ENCODE measurements at regions of chr2 and their contacts with region 1.

Region 1: GRCh38 chr2:29309090-29310029 is 194.1 kb downstream of the CLIP4 start:
- DNase-seq: peak; percentile 72 to 84 (median 76)
- H3K4me3 ChIP-seq: no peak overlapping the region
- H3K27ac ChIP-seq: no peak overlapping the region
- H3K4me1 ChIP-seq: peaks cover 5 to 31% (median 17%) of the 10 kb centered on the region in 4 experiments
- H3K27me3 ChIP-seq: peaks cover 0 to 1% (median 0%) of the 10 kb centered on the region in 5 experiments

Region 2: GRCh38 chr2:28729698-28730097 is 579.7 kb before region 1 on chr2:
- CTCF ChIA-PET with region 1: no interaction called
- POLR2A ChIA-PET with region 1: no interaction called
- DNase-seq: no peak
- H3K4me3 ChIP-seq: no peak overlapping the region
- H3K27ac ChIP-seq: no peak overlapping the region
- H3K4me1 ChIP-seq: no peaks in the 10 kb centered on the region
- H3K27me3 ChIP-seq: no peaks in the 10 kb centered on the region

Region 3: GRCh38 chr2:29097569-29097968 is 211.8 kb before region 1 on chr2:
- CTCF ChIA-PET with region 1: no interaction called
- POLR2A ChIA-PET with region 1: no interaction called
- DNase-seq: no peak
- H3K4me3 ChIP-seq: no peak overlapping the region
- H3K27ac ChIP-seq: no peak overlapping the region
- H3K4me1 ChIP-seq: no peaks in the 10 kb centered on the region
- H3K27me3 ChIP-seq: no peaks in the 10 kb centered on the region

Region 4: DNA sequence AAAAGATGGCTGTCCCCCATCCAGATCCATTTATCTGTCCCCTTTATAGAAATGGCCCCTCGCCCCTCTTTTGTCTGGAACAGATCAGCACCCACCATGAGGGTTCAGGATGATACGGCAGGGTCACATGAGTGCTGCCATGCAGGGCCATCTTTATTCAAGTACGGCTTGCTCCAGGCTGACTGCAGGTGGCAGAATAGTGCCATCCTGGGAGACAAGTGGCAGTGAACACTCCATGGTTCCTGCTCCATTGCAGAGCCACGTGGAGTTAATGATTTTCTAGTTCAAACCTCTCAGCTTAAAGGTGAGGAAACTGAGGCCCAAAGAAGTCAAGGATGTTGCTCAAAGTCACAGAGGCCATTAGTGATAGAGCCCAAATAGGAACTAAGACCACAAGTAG is 13.5 kb before region 1 on chr2:
- CTCF ChIA-PET with region 1: interaction called, 20 read pairs
- POLR2A ChIA-PET with region 1: no interaction called
- DNase-seq: peak; percentile 44 to 70 (median 58)
- H3K4me3 ChIP-seq: no peak overlapping the region
- H3K27ac ChIP-seq: no peak overlapping the region
- H3K4me1 ChIP-seq: no peaks in the 10 kb centered on the region
- H3K27me3 ChIP-seq: peaks cover 0 to 3% (median 3%) of the 10 kb centered on the region in 5 experiments

Measured in common myeloid progenitor, CD34-positive (primary cell).